ENCODE measurements at regions of chr19 and their contacts with region 1.

Region 1: DNA sequence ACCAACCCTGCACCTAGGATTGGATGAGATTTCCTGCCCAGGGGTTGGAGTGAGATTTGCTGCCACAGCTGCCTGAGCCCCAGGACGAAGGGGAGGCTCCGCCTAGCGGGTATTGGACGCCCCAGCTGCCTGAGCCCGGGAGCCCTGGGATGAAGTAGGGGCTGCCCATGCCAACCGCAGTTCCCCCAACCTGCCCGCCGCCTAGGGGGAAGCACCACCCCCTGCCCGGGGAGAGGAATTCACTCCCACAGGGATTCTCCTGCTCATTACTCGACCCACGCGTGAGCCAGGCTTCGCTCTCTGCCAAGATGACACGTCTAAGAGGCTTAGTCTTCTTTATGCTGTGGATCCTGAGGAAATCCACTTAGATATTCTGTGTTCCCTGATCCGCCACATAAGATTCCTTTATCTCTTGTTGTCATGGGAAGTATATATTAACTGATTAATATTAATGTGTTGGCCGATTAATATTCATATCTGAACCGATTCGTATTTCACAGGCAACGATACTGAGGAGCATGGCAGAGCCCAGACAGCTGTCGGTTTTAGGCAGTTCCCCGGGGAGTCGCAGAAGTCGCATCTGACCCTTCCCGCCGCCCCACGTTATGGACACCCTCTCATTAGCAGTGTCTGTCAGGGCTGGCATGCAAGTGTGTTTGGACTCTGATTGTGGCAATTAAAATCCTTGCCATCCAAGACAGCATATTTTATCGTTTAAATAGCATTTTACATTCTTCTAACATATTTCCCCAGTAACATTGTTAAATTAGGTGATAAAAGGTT is 44.5 kb upstream of the KCTD15 start:
- DNase-seq: peak; percentile 22
- H3K4me3 ChIP-seq: no peak overlapping the region
- H3K27ac ChIP-seq: no peak overlapping the region
- H3K4me1 ChIP-seq: peaks cover 29% of the 10 kb centered on the region
- H3K27me3 ChIP-seq: no peaks in the 10 kb centered on the region
- CTCF ChIP-seq: peak; percentile 34

Region 2: GRCh38 chr19:32196690-32197420 is 1555.4 kb before region 1 on chr19:
- CTCF ChIA-PET with region 1: no interaction called
- POLR2A ChIA-PET with region 1: interaction called, 12 read pairs
- intact Hi-C with region 1: no loop called
- DNase-seq: no peak
- H3K4me3 ChIP-seq: no peak overlapping the region
- H3K27ac ChIP-seq: no peak overlapping the region
- H3K4me1 ChIP-seq: peaks cover 5% of the 10 kb centered on the region
- H3K27me3 ChIP-seq: no peaks in the 10 kb centered on the region
- CTCF ChIP-seq: no peak

Region 3: DNA sequence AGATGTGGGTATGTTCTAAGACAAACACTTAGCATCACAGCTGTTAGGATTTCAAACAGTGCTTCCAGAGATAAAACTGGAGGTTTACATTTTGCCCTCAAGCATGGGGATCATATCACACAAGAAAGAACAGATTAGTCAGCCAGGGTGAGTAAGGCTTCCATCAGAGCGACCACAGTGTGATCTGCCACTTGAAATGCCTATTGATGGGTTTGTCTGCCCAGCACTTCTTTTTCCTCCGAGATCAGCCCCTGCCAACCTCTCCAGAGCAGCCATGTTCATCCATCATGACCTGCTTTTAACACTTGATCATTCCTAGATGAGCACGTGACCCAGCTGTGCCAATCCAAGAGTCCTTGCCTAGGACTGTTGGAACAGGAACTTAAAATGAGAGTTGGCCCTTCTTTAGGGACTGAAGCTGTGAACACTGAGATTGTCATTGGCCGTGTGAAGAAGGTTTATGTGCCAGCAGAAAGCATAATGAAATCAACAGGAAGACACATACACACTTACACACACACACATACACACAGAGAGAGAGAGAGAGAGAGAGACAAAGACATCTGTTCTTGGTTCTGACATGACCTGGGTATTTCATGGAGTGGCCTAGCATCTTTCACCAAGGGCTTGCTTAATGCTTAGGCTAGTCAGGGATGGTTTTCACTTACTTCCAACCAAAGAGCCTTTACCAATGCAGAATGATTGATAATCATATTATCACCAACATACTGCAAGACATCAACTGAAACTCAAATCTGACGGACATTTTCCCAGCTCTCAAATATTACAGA is 383.9 kb before region 1 on chr19:
- CTCF ChIA-PET with region 1: no interaction called
- POLR2A ChIA-PET with region 1: no interaction called
- intact Hi-C with region 1: no loop called
- DNase-seq: no peak
- H3K4me3 ChIP-seq: no peak overlapping the region
- H3K27ac ChIP-seq: no peak overlapping the region
- H3K4me1 ChIP-seq: no peaks in the 10 kb centered on the region
- H3K27me3 ChIP-seq: no peaks in the 10 kb centered on the region
- CTCF ChIP-seq: no peak

Measured in A673 (cell line).